ENCODE measurements at regions of chr1 and their contacts with region 1.

Region 1: DNA sequence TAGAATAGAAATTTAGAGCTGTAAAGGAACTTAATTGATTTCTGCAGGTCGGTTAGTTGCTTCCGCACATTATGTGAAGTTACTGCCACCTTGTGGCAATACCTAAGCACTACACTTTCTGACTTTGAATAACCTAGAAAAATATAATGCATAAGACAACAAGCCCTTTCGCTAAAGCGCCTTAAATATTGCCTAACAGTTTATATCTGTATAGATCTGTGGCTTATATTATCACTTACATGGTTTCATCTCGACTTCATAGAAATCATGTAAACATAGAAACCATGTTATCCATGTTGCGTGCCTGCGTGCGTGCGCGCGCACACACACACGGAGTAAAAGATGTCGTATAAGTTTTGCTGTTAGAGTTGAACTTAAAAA is 10.9 kb upstream of the IFI16 start:
- DNase-seq: peak; percentile 32
- ATAC-seq: peak; percentile 63
- H3K4me3 ChIP-seq: no peak overlapping the region
- H3K27ac ChIP-seq: no peak overlapping the region
- H3K4me1 ChIP-seq: peaks cover 6 to 8% of the 10 kb centered on the region in 2 experiments
- H3K27me3 ChIP-seq: no peaks in the 10 kb centered on the region
- CTCF ChIP-seq: peak; percentile 51 to 89 (median 66); a peak in 5 of 6 replicates
- POLR2A ChIP-seq: no peak
- RAD21 ChIP-seq: peak; percentile 75

Region 2: DNA sequence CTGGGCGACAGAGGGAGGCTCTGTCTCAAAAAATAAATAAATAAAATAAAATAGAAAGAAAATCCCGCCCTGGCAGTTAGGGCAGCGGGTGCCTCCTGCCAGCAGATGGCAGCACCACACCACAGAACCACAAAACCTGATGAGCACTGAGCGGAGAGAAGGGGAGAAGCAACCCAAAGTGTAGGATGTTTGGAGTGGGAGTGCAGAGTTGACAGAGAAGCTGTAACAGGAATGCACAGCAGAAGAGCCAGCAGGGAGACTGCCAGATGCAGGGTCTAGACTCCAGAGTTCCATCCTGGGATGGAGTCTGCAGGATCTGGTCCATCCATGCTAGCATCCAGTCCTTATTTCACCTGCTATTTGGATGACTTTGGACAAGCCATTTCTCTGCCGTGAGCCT is 1035.1 kb before region 1 on chr1:
- CTCF ChIA-PET with region 1: no interaction called
- POLR2A ChIA-PET with region 1: no interaction called
- RAD21 ChIA-PET with region 1: no interaction called
- intact Hi-C with region 1: loop called (anchors 5 kb)
- DNase-seq: peak; percentile 39
- ATAC-seq: peak; percentile 88
- H3K4me3 ChIP-seq: no peak overlapping the region
- H3K27ac ChIP-seq: no peak overlapping the region
- H3K4me1 ChIP-seq: peaks cover 0 to 10% of the 10 kb centered on the region in 2 experiments; a peak in 2 of 4 replicates
- H3K27me3 ChIP-seq: peaks cover 25% of the 10 kb centered on the region
- CTCF ChIP-seq: peak; percentile 71 to 96 (median 80)
- POLR2A ChIP-seq: no peak
- RAD21 ChIP-seq: peak; percentile 95

Region 3: DNA sequence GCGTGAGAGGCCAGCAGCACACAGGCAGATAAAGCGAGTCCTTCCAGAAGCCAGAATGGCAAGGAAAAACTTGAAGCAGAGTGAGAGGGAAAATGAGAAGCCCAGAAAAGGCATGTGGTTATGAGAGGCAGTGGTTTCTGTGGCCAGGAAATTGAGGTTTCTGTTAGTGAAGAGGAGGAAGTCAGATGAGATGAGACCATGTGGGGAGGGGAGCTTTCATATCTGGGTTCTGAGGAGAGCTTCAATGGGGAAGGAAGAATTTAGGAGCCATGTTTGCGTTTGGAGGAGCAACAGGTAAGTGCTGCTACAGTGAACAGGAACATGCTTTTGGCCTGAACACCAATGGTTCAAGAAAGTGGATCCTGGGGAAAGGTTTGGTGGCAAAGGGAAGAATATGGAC is 750.7 kb before region 1 on chr1:
- CTCF ChIA-PET with region 1: no interaction called
- POLR2A ChIA-PET with region 1: no interaction called
- RAD21 ChIA-PET with region 1: no interaction called
- intact Hi-C with region 1: loop called (anchors 10 kb)
- DNase-seq: no peak
- ATAC-seq: no peak
- H3K4me3 ChIP-seq: no peak overlapping the region
- H3K27ac ChIP-seq: no peak overlapping the region
- H3K4me1 ChIP-seq: no peaks in the 10 kb centered on the region
- H3K27me3 ChIP-seq: peaks cover 7% of the 10 kb centered on the region; the same call in 1 of the 2 replicates
- CTCF ChIP-seq: no peak
- POLR2A ChIP-seq: no peak
- RAD21 ChIP-seq: no peak

Region 4: DNA sequence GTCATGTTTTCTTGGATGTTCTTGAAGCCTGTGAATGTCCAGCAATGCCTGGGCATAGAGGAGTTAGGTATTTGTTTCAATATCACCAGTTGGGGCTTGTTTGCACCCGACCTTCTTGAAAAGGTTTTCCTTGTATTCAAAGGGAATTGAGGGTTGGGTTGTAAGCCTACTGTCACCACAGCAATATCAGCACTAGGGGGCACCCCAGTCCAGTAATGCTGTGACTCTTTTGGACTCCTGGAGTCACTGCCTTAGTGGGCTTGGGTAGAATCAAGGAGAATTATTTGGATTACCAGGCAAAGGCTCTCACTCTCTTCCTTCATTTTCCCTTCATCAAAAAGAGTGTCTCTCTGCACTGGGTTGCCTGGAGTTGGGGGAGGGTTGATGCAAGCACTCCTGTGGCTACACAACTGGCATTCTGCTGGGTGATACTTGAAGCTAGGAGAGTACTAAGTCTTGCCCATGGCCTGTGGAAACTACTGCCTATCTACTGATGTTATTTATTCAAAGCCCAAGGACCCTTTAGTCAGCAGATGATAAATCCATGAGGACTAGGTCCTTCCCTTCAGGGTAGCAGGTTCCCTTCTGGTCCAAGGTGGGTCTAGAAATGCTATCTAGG is 492.3 kb before region 1 on chr1:
- CTCF ChIA-PET with region 1: interaction called, 7 read pairs
- POLR2A ChIA-PET with region 1: no interaction called
- RAD21 ChIA-PET with region 1: no interaction called
- intact Hi-C with region 1: loop called (anchors 1 kb)
- DNase-seq: no peak
- ATAC-seq: peak; percentile 49; the same call in 1 of the 2 replicates
- H3K4me3 ChIP-seq: no peak overlapping the region
- H3K27ac ChIP-seq: no peak overlapping the region
- H3K4me1 ChIP-seq: no peaks in the 10 kb centered on the region
- H3K27me3 ChIP-seq: no peaks in the 10 kb centered on the region
- CTCF ChIP-seq: peak in 2 of 3 experiments; percentile 48 to 59; a peak in 4 of 6 replicates
- POLR2A ChIP-seq: no peak
- RAD21 ChIP-seq: peak; percentile 46

Region 5: DNA sequence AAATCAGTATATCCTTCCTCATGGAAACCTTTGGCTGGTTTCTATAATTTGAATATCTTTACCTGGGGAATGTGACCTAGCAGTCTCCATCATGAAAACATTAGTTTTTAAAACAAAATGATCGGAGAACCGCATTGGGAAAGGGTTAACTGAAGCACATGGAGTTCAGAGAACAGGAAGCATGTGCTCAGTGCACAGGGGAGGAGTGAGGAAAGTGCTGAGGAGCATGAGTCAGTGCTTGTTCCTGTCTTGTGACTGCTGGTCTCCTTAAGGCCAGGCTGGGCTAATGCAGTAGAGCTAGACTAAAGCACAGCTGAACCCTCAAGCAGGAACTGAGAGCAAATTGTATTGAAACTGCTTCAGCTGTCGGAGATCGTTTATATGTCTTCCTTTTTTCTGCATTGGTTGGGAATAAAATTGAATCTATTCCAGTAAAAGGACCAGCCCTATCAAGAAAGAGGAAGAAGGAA is 16.7 kb after region 1 on chr1:
- CTCF ChIA-PET with region 1: no interaction called
- POLR2A ChIA-PET with region 1: no interaction called
- RAD21 ChIA-PET with region 1: no interaction called
- intact Hi-C with region 1: no loop called
- DNase-seq: no peak
- ATAC-seq: no peak
- H3K4me3 ChIP-seq: no peak overlapping the region
- H3K27ac ChIP-seq: no peak overlapping the region
- H3K4me1 ChIP-seq: no peaks in the 10 kb centered on the region
- H3K27me3 ChIP-seq: peaks cover 9% of the 10 kb centered on the region
- CTCF ChIP-seq: no peak
- POLR2A ChIP-seq: no peak
- RAD21 ChIP-seq: no peak